PC-3 (cell line): ENCODE measurements at regions of chr4 and their contacts with region 1.

Region 1: DNA sequence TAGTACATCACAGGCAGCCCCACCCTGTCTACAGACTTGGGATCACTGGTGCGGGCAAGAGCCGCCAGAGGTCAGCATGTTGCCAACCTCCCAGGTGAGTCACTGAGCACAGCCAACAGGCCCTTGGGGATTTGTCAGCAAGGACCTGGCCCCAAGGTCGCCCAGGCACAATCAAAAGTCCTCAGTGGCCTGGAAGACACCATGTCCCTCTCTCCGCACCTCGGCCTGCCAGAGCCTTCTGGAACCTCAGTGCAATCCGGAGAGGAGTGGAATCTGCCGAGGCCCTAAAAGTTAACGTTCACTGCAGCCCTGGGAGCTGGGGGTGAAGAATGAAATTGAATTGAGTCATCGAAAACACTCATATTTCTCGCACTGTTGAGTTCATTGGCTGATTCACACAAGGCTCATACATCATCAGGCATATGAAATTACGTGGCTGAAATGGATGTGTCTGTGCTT is 74.3 kb downstream of the WFS1 start:
- DNase-seq: peak; percentile 85
- ATAC-seq: peak; percentile 96
- H3K4me3 ChIP-seq: peak overlapping the region; percentile 39; the same call in 1 of the 2 replicates
- H3K27ac ChIP-seq: peak overlapping the region; percentile 96
- H3K4me1 ChIP-seq: peaks cover 24% of the 10 kb centered on the region
- H3K27me3 ChIP-seq: no peaks in the 10 kb centered on the region
- CTCF ChIP-seq: peak; percentile 44; the same call in 1 of the 2 replicates

Region 2: GRCh38 chr4:6381571-6382120 is 37.7 kb after region 1 on chr4:
- CTCF ChIA-PET with region 1: no interaction called
- POLR2A ChIA-PET with region 1: no interaction called
- intact Hi-C with region 1: loop called (anchors 1 kb)
- DNase-seq: no peak
- ATAC-seq: no peak
- H3K4me3 ChIP-seq: no peak overlapping the region
- H3K27ac ChIP-seq: no peak overlapping the region
- H3K4me1 ChIP-seq: no peaks in the 10 kb centered on the region
- H3K27me3 ChIP-seq: no peaks in the 10 kb centered on the region
- CTCF ChIP-seq: no peak

Region 3: GRCh38 chr4:6546681-6547447 is 202.9 kb after region 1 on chr4:
- CTCF ChIA-PET with region 1: no interaction called
- POLR2A ChIA-PET with region 1: no interaction called
- intact Hi-C with region 1: loop called (anchors 5 kb)
- DNase-seq: peak; percentile 66
- ATAC-seq: no peak
- H3K4me3 ChIP-seq: no peak overlapping the region
- H3K27ac ChIP-seq: no peak overlapping the region
- H3K4me1 ChIP-seq: no peaks in the 10 kb centered on the region
- H3K27me3 ChIP-seq: no peaks in the 10 kb centered on the region
- CTCF ChIP-seq: peak; percentile 91